ENCODE measurements at regions of chr9 and their contacts with region 1.

Region 1: GRCh38 chr9:83980395-83981125 is at the start of gene RMI1:
- DNase-seq: peak; percentile 100
- H3K4me3 Mint-ChIP-seq: peak within 1 kb of the TSS; percentile 89
- H3K27ac Mint-ChIP-seq: peak within 1 kb of the TSS; percentile 99
- H3K4me1 Mint-ChIP-seq: peaks cover 37% of the 10 kb centered on the region
- H3K27me3 Mint-ChIP-seq: no peaks in the 10 kb centered on the region
- total RNA-seq, gene RMI1: 19.2 to 19.3 TPM

Region 2: DNA sequence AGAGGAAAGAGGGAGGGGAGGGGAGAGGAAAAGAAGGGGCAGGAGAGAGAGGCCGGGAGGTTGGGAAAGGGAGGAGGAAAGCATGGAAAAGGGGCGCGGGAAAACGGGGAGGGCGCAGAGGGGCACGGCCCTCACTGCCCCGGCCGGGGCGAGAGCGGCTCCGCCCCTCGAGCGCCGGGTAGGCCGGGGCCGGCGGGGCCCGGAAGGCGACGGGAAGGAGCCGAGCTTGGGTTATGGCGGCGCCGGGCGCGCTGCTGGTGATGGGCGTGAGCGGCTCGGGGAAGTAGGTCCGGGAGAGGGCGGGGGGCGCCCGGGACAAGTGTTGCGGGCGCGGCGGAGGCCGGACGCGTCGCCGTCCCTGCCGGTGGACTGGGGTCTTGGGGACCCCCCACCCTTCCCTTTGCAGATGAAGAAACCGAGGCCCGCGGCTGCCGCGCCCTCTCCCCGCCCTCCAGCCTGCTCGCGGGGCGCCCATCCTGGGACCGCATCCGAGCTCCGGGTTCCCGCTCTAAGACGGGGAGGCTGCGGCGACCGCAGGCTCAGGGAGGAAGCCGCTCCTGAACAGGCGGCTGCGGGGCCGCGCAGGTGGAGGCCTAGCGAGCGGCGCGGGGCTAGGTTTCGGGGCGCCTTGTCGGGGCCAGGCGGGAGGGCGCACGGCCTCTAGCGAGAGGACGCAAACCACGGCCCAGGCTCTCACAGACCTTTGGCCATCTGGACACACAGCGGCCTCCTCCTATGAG is 357.5 kb before region 1 on chr9 and contains the start of gene IDNK:
- CTCF ChIA-PET with region 1: no interaction called
- intact Hi-C with region 1: loop called (anchors 1 kb)
- DNase-seq: peak; percentile 38
- H3K4me3 Mint-ChIP-seq: peak within 1 kb of the TSS; percentile 72
- H3K27ac Mint-ChIP-seq: peak within 1 kb of the TSS; percentile 93
- H3K4me1 Mint-ChIP-seq: peaks cover 24% of the 10 kb centered on the region
- H3K27me3 Mint-ChIP-seq: no peaks in the 10 kb centered on the region
- total RNA-seq, gene IDNK: 2.7 to 3.2 TPM

Region 3: GRCh38 chr9:83920927-83921707 is 59.4 kb before region 1 on chr9 and contains the start of gene KIF27:
- CTCF ChIA-PET with region 1: no interaction called
- intact Hi-C with region 1: loop called (anchors 1 kb)
- DNase-seq: peak; percentile 98
- H3K4me3 Mint-ChIP-seq: peak within 1 kb of the TSS; percentile 82
- H3K27ac Mint-ChIP-seq: peak within 1 kb of the TSS; percentile 90
- H3K4me1 Mint-ChIP-seq: peaks cover 10% of the 10 kb centered on the region
- H3K27me3 Mint-ChIP-seq: no peaks in the 10 kb centered on the region
- total RNA-seq, gene KIF27: 2.7 to 3.8 TPM

Region 4: DNA sequence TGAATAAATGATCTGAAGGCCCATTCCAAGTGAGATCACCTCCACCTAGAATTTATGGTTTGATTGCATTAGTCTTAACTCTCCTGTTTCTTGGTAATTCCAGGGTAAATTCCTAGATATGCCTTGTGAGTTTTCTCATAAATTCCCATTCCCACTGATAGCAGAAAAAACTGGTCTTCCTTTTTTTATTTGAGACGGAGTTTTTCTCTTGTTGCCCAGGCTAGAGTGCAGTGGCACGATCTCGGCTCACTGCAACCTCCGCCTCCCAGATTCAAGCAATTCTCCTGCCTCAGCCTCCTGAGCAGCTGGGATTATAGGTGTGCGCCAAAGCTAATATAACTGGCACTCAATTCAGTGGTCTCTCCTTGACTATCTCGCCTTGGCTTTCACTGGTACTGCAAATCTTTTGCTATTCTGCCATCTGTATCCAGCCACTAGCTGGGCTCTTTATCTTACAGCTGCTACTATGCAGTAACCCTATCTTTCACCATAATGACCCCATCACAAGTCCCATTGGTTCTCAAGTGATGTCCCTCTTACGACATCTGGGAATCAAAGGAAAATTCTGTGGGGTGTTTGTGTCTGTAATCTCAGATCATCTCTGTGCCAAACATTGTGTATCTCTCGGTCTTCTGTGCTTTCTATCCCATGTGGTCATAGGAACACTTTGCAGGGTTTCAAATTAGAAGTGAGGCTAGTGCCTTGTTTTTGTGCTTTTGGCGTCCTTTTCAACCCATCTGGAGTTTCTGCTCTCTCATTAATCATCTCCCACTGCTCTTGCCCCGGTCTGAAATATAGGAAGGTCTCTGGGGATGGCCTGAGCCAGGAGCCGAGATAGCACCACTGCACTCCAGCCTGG is 15.0 kb before region 1 on chr9:
- CTCF ChIA-PET with region 1: interaction called, 5 read pairs
- intact Hi-C with region 1: loop called (anchors 1 kb)
- DNase-seq: no peak
- H3K4me3 Mint-ChIP-seq: no peak overlapping the region
- H3K27ac Mint-ChIP-seq: peak overlapping the region; percentile 32
- H3K4me1 Mint-ChIP-seq: peaks cover 6% of the 10 kb centered on the region
- H3K27me3 Mint-ChIP-seq: no peaks in the 10 kb centered on the region

Region 5: GRCh38 chr9:84216151-84216550 is 235.6 kb after region 1 on chr9:
- CTCF ChIA-PET with region 1: no interaction called
- intact Hi-C with region 1: no loop called
- DNase-seq: no peak
- H3K4me3 Mint-ChIP-seq: no peak overlapping the region
- H3K27ac Mint-ChIP-seq: no peak overlapping the region
- H3K4me1 Mint-ChIP-seq: no peaks in the 10 kb centered on the region
- H3K27me3 Mint-ChIP-seq: no peaks in the 10 kb centered on the region

Region 6: DNA sequence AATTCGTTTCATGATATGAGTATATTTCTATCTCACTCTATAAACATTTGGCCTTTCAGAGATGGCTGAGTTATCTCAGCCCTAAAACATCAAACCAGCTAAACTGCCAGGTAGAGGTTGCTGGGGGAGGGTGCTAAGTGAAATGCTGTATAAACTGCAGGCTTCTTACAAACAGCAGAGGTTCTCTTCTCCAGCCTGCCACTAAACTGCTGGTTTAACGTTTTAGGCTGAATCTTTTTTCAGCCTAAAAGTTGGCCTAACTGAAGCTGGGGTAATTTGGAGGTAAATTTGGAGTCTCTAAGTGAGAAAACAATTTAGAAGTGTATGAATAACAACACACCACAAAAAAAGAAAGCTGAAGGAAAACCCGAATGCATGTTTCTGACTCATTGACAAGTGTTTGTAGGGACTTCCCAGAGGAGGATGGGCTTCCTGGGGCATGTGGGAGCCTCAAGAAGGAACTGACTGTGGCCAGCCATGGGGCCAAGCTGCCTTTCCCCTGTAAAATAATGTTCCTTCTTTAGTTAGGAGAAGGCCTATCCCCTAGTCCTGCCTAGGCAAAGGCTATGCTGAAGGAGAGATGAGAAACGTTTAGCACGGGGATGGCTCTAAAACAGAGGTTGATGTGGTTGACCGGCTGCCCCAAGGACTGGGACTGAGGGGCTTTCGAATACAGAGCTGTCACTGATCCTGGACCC is 315.7 kb after region 1 on chr9:
- CTCF ChIA-PET with region 1: no interaction called
- intact Hi-C with region 1: loop called (anchors 1 kb)
- DNase-seq: peak; percentile 83
- H3K4me3 Mint-ChIP-seq: peak overlapping the region; percentile 52
- H3K27ac Mint-ChIP-seq: peak overlapping the region; percentile 99
- H3K4me1 Mint-ChIP-seq: peaks cover 60% of the 10 kb centered on the region
- H3K27me3 Mint-ChIP-seq: no peaks in the 10 kb centered on the region

Region 7: DNA sequence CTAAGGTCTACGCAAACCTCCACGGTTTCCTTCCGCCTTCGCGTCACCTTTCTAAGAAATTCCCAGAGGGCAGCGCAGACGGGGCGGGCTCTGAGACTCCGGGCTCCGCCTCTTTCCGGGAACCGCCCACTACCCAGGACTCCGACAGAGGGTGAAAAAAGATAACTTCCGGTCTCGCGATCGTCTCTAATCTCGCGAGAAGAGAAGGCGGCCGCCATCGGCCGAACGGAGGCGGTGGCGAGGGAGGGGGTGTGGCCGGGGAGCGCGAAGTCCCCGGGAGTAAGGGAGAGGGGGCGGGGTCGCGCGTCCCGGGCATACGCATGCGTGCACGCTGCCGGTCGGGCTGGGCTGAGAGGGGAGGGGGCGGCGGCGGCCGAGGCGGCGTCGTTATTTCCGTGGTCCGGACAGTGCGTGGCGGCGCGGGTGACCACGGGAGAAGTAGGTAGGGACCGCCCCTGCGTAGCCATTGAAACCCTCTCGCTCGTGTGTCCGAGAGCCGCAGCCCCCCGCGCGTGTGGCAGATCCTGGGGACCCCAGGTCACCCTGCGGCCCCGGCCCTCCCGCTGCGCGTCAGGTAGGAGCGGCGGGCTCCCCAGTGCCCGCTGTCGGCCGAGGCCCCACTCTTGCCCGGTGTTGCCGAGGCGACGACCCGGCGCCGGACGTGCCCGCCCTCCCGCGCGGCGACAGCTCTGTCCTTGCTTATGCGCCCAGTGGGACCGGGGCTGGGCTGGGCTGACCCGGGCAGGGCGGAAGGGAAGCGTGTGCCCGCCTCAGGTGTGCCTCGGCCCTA is 1960.5 kb after region 1 on chr9 and contains the start of gene NAA35:
- CTCF ChIA-PET with region 1: no interaction called
- intact Hi-C with region 1: loop called (anchors 1 kb)
- DNase-seq: peak; percentile 99
- H3K4me3 Mint-ChIP-seq: peak within 1 kb of the TSS; percentile 82
- H3K27ac Mint-ChIP-seq: peak within 1 kb of the TSS; percentile 89
- H3K4me1 Mint-ChIP-seq: peaks cover 17% of the 10 kb centered on the region
- H3K27me3 Mint-ChIP-seq: no peaks in the 10 kb centered on the region
- total RNA-seq, gene NAA35: 14.2 to 14.6 TPM